ENCODE measurements at regions of chr17 and their contacts with region 1.

Region 1: GRCh38 chr17:30336369-30337171 is 2.7 kb upstream of the TMIGD1 start:
- DNase-seq: peak; percentile 63
- H3K4me3 Mint-ChIP-seq: no peak overlapping the region
- H3K27ac Mint-ChIP-seq: peak overlapping the region; percentile 34
- H3K4me1 Mint-ChIP-seq: peaks cover 38% of the 10 kb centered on the region
- H3K27me3 Mint-ChIP-seq: peaks cover 3% of the 10 kb centered on the region

Region 2: DNA sequence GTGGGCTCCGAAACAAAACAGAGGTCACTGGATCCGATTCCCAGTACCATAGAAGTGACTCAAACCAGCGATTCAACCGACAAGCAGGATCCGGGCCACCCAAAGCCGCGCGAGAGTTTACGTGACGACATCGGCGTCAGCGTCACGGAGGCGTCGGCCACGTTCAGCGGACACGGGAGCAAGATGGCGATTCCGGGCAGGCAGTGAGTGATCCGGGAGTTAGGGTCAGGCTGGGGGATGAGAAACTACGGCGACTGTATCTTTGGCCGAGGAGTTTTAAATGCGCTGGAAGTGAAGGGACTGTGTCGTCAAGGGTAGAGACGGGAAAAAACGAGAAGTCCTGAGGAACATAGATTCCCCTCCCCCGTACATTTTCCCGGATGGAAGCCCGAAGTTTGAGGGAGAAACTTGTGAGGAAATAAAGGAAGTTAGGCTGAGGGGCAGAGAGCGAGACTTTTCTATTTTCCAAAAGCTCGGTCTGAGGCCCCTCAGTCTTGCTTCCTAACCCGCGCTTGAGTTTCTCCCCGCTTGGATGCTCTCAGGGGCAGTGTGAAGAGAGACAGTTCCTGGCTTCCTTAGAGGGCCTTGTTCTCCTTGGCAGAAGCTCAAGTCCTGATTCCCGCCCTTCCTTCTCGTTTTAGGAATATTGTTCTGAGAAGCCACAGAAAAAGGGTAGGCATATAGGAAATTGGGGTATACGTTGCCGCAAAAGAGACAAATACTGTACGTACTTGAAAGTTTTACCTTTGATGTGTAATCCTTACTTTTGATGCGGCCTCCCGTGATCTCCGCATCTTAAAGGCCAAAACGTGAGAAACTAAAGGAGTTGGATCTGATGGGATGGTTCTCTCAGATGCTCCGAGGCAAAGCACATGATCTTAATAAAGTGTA is 219.7 kb before region 1 on chr17 and contains the start of gene NSRP1:
- CTCF ChIA-PET with region 1: interaction called, 12 read pairs
- POLR2A ChIA-PET with region 1: interaction called, 4 read pairs
- DNase-seq: peak; percentile 97
- H3K4me3 Mint-ChIP-seq: peak within 1 kb of the TSS; percentile 86
- H3K27ac Mint-ChIP-seq: peak within 1 kb of the TSS; percentile 90
- H3K4me1 Mint-ChIP-seq: peaks cover 62% of the 10 kb centered on the region
- H3K27me3 Mint-ChIP-seq: no peaks in the 10 kb centered on the region
- total RNA-seq, gene NSRP1: 21.6 to 22.7 TPM

Region 3: GRCh38 chr17:30278032-30278431 is 58.5 kb before region 1 on chr17:
- CTCF ChIA-PET with region 1: interaction called, 13 read pairs
- POLR2A ChIA-PET with region 1: no interaction called
- DNase-seq: no peak
- H3K4me3 Mint-ChIP-seq: no peak overlapping the region
- H3K27ac Mint-ChIP-seq: no peak overlapping the region
- H3K4me1 Mint-ChIP-seq: no peaks in the 10 kb centered on the region
- H3K27me3 Mint-ChIP-seq: no peaks in the 10 kb centered on the region

Region 4: GRCh38 chr17:30323895-30324319 is 12.7 kb before region 1 on chr17:
- CTCF ChIA-PET with region 1: interaction called, 15 read pairs
- POLR2A ChIA-PET with region 1: interaction called, 8 read pairs
- DNase-seq: peak; percentile 22
- H3K4me3 Mint-ChIP-seq: no peak overlapping the region
- H3K27ac Mint-ChIP-seq: peak overlapping the region; percentile 53
- H3K4me1 Mint-ChIP-seq: peaks cover 21% of the 10 kb centered on the region
- H3K27me3 Mint-ChIP-seq: peaks cover 5% of the 10 kb centered on the region

Region 5: DNA sequence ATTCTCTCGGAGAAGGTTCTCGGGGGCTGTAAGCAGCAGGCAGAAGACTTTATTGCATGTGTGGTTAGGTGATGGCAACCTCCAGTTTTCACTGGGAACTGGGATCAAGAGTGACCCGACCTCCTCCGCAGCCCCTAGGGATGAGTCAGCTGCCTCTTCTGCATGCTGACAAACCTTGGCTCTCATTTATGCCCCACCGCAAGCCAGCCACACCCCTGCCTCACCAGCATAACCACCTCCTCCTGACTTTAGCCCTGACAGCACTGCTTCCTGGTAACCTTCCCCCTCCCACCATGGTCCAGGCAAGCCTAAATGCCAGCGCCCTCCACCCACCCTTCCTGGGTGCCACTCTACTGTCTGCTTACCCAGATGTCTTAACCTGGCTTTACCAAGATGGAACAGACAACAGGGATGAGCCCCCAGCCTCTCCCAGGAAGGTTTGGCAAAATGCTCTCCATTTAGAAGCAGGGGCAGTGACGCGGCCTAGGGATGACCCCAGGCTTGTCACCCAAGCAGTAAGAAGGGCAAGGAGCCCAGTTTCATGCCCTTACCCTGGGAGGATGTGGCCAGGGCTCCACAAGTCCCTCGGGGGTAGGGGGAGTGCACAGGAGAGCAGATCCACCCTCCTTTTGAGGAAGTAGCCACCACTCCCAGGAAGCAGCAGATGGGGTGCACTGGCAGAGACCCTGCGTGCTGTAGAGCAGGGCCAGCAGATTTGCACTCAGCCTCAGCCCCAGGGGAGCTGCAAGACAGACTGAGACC is 214.1 kb after region 1 on chr17:
- CTCF ChIA-PET with region 1: no interaction called
- POLR2A ChIA-PET with region 1: no interaction called
- DNase-seq: peak; percentile 37
- H3K4me3 Mint-ChIP-seq: no peak overlapping the region
- H3K27ac Mint-ChIP-seq: peak overlapping the region; percentile 40
- H3K4me1 Mint-ChIP-seq: peaks cover 19% of the 10 kb centered on the region
- H3K27me3 Mint-ChIP-seq: no peaks in the 10 kb centered on the region

Measured in activated CD4-positive, alpha-beta memory T cell treated with anti-CD3 and anti-CD28 coated beads, Interleukin-2, amount 10 ng/mL, durations not matched to agents 7 days and 5 days (primary cell).